Endothelial cell of umbilical vein (primary cell): ENCODE measurements at regions of chr19 and their contacts with region 1.

Region 1: GRCh38 chr19:48999481-49000325 is 6.0 kb downstream of the RUVBL2 start:
- DNase-seq: peak; percentile 64
- H3K4me3 ChIP-seq: no peak overlapping the region
- H3K27ac ChIP-seq: no peak overlapping the region
- H3K4me1 ChIP-seq: peaks cover under 1% of the 10 kb centered on the region
- H3K27me3 ChIP-seq: no peaks in the 10 kb centered on the region
- CTCF ChIP-seq: peak; percentile 75 to 85
- POLR2A ChIP-seq: no peak

Region 2: DNA sequence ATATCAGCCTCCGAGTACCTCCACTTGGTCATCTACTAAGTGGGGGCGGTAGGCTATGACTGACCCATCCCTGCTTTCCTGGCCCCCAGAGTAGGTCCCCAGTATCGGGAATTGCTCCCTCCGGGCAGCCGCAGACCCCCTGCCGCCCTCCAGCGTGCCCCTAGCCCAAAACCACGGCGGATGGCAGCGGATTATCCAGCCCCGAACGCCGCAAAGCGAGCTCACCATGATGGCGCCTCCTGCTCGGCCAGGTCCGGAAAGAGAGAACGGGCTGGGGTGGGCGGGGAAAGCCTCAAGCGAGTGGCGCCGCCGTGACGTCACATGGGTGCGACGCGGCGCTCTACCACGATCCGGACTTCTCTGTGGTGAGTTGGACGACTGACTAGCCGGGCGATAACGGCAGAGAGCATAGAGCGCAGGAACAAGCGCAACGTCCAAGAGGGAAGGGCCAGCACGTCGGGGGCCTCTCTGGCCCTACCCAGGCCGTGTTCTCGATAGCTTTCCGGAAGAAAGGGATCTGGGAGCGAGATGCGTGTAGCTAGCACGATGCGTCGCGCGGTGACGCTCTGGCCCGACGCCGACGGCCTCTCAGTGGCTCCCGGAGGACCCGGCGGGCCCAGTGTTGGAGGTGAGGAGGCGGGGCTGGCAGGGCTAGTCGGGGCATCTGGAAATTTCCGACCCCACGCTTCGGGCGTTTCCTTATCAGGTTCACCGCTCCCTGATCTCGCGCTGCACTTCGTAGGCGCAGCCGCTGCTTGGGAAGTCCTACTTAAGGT is 380.6 kb before region 1 on chr19 and contains the starts of genes RPL18 and SPHK2:
- CTCF ChIA-PET with region 1: no interaction called
- POLR2A ChIA-PET with region 1: no interaction called
- dilution Hi-C with region 1: no loop called
- intact Hi-C with region 1: no loop called
- DNase-seq: peak; percentile 100
- H3K4me3 ChIP-seq: peak within 1 kb of the TSS; percentile 85 to 99 (median 96)
- H3K27ac ChIP-seq: peak within 1 kb of the TSS; percentile 86
- H3K4me1 ChIP-seq: peaks cover 31% of the 10 kb centered on the region
- H3K27me3 ChIP-seq: no peaks in the 10 kb centered on the region
- CTCF ChIP-seq: no peak
- POLR2A ChIP-seq: peak; percentile 96
- total RNA-seq, gene RPL18: 1,402 and 1,407 TPM in 2 replicates
- total RNA-seq, gene SPHK2: 30.5 and 31.1 TPM in 2 replicates

Region 3: DNA sequence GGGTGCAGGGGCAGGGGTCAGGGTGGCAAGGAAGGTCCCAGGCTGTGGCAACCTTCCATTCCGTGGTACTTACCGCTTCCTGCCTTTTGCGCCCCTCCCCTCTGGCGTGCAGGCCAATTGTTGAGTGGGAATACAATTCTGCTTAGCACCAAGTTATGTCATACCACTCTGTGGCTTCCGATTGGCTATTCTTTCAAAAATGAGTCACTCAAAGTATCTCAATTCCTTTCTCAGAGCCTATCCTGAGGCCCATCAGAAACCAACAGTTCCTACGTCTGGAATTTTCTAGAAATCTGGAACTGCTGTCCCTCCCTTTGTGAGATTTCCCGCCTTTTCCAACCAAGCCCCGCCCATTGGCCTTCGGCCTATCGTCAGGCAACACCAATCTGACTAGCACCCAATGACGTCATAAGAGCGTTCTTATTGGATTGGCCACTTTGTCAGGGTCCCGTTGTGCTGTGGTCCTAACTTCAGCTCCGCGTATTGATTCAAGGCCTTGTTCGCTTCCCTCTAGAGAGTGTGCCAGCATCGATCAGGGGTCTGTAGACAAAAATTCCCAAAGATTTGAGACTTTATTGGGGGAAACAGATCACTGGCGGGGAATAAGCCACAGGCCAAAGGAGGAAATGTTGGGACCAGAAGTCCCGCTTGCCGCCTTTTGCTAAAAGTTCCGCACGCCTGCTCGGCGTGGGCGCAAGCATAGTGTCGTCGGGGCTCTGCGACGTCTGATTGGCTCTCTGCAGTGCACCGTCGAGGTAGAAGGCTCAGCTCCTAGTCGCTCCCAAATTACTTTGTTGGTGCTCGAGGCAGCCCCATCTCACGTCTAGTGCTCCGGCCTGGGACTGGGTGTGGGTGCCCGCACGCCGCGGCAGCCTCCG is 338.6 kb before region 1 on chr19:
- CTCF ChIA-PET with region 1: no interaction called
- POLR2A ChIA-PET with region 1: no interaction called
- dilution Hi-C with region 1: no loop called
- intact Hi-C with region 1: no loop called
- DNase-seq: peak; percentile 96
- H3K4me3 ChIP-seq: no peak overlapping the region
- H3K27ac ChIP-seq: peak overlapping the region; percentile 19
- H3K4me1 ChIP-seq: peaks cover 2% of the 10 kb centered on the region
- H3K27me3 ChIP-seq: peaks cover 0 to 2% of the 10 kb centered on the region in 2 experiments
- CTCF ChIP-seq: no peak
- POLR2A ChIP-seq: no peak

Region 4: GRCh38 chr19:48798937-48799336 is 200.8 kb before region 1 on chr19:
- CTCF ChIA-PET with region 1: no interaction called
- POLR2A ChIA-PET with region 1: no interaction called
- dilution Hi-C with region 1: no loop called
- intact Hi-C with region 1: no loop called
- DNase-seq: peak; percentile 15
- H3K4me3 ChIP-seq: no peak overlapping the region
- H3K27ac ChIP-seq: no peak overlapping the region
- H3K4me1 ChIP-seq: peaks cover 3% of the 10 kb centered on the region
- H3K27me3 ChIP-seq: no peaks in the 10 kb centered on the region
- CTCF ChIP-seq: no peak
- POLR2A ChIP-seq: no peak

Region 5: DNA sequence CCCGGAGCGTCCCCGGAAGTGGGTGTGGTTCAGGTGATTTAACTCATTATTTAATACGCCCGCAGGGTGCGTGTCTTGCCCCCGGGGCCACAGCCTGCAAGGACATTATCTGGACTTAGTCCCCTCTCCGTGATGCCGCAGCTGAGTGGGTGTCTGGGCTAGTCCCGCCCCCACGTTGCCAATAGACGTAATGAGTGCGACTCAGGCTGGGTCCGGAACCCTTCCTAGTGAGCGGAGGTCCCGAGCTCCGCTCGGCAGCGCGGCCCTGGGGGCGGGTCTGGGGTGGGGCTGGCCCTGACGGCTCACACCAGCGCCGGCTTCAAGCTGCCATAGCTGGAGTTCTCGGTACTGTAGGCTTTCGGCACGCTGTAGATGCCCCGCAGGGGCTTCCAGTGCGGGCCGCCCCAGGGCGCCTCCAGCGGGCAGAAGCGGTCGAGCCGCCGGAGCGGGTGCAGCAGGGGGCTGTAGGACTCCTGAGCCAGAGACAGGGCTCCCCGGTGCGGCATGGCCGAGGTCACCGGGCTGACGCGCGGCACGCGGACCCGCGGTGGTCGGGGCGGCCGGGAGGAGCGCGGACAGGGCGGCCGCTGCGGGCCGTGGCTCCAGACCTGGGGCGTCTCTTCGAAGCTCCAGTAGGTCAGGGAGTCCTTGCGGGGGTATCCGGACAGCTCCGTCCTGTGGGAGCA is 18.1 kb after region 1 on chr19:
- CTCF ChIA-PET with region 1: interaction called, 59 read pairs
- POLR2A ChIA-PET with region 1: no interaction called
- dilution Hi-C with region 1: no loop called
- intact Hi-C with region 1: no loop called
- DNase-seq: peak; percentile 70
- H3K4me3 ChIP-seq: peak overlapping the region; percentile 25 to 40 (median 26)
- H3K27ac ChIP-seq: no peak overlapping the region
- H3K4me1 ChIP-seq: peaks cover 10% of the 10 kb centered on the region
- H3K27me3 ChIP-seq: peaks cover 0 to 5% of the 10 kb centered on the region in 2 experiments
- CTCF ChIP-seq: peak; percentile 48 to 75
- POLR2A ChIP-seq: peak; percentile 45

Region 6: GRCh38 chr19:49073514-49074378 is 74.0 kb after region 1 on chr19:
- CTCF ChIA-PET with region 1: interaction called, 8 read pairs
- POLR2A ChIA-PET with region 1: no interaction called
- dilution Hi-C with region 1: no loop called
- intact Hi-C with region 1: loop called (anchors 2 kb)
- DNase-seq: no peak
- H3K4me3 ChIP-seq: no peak overlapping the region
- H3K27ac ChIP-seq: no peak overlapping the region
- H3K4me1 ChIP-seq: no peaks in the 10 kb centered on the region
- H3K27me3 ChIP-seq: peaks cover 22 to 24% of the 10 kb centered on the region in 2 experiments
- CTCF ChIP-seq: peak in 1 of 2 donors; percentile 8
- POLR2A ChIP-seq: no peak

Region 7: GRCh38 chr19:49210108-49210900 is 210.6 kb after region 1 on chr19:
- CTCF ChIA-PET with region 1: interaction called, 9 read pairs
- POLR2A ChIA-PET with region 1: no interaction called
- dilution Hi-C with region 1: no loop called
- intact Hi-C with region 1: loop called (anchors 1 kb)
- DNase-seq: peak; percentile 9
- H3K4me3 ChIP-seq: no peak overlapping the region
- H3K27ac ChIP-seq: no peak overlapping the region
- H3K4me1 ChIP-seq: no peaks in the 10 kb centered on the region
- H3K27me3 ChIP-seq: no peaks in the 10 kb centered on the region
- CTCF ChIP-seq: no peak
- POLR2A ChIP-seq: no peak